ENCODE measurements at regions of chr17 and their contacts with region 1.

Region 1: DNA sequence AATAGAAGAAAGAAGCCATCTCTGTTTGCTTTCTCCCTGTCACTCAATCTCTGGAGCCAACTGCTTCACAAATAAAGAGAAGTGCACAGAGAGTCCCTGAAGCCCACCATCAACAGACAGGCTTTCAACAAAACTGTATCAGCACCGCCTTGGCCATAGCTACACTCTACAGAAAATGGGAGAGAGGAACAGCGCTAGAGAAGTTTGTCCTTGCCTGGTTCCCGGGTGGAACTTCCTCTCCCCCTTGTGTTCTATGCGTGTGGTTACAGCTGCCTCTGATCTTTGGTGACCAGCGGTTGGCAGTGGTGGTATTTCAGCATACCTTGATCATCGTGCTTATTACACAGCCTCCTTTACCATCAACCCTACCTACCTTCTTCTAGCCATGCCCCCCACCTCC is 91.4 kb upstream of the CCL2 start:
- DNase-seq: no peak
- H3K4me3 ChIP-seq: no peak overlapping the region
- H3K27ac ChIP-seq: no peak overlapping the region
- H3K4me1 ChIP-seq: no peaks in the 10 kb centered on the region
- H3K27me3 ChIP-seq: no peaks in the 10 kb centered on the region
- CTCF ChIP-seq: no peak
- EP300 ChIP-seq: no peak
- POLR2A ChIP-seq: no peak

Region 2: GRCh38 chr17:34110315-34110714 is 53.3 kb before region 1 on chr17:
- intact Hi-C with region 1: loop called in 1 of 4 experiments (anchors 5 kb)
- DNase-seq: no peak
- H3K4me3 ChIP-seq: no peak overlapping the region
- H3K27ac ChIP-seq: no peak overlapping the region
- H3K4me1 ChIP-seq: no peaks in the 10 kb centered on the region
- H3K27me3 ChIP-seq: no peaks in the 10 kb centered on the region
- CTCF ChIP-seq: no peak
- EP300 ChIP-seq: no peak
- POLR2A ChIP-seq: no peak

Measured in ovary (tissue), 10 donors.